A549 (cell line): ENCODE measurements at regions of chr3 and their contacts with region 1.

Region 1: DNA sequence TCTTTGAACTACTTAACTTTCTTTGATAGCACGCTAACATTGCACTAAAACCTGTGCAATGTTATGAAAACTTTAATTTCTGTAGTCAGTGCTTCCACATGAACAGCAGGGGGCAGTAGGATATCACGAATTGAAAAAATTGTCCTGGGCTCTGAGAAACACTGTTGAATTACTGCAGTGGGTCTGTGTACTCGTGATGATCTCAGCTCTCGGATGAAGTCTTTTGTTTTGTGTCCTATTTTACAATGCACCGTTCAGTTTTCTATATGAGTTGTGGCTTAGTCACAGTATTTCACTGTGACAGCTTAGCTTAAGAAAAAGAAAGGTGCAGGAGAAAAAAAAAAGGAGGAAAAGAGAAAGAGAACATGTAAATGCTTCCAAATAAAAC is 141.3 kb upstream of the CCDC54 start:
- DNase-seq: peak; percentile 69 to 81
- ATAC-seq: peak; percentile 66 to 72
- H3K4me3 ChIP-seq: peak overlapping the region; percentile 47
- H3K27ac ChIP-seq: peak overlapping the region; percentile 53 to 69
- H3K4me1 ChIP-seq: peaks cover 6% of the 10 kb centered on the region; the same call in 2 of the 3 replicates
- CTCF ChIP-seq: peak; percentile 97
- EP300 ChIP-seq: no peak
- POLR2A ChIP-seq: no peak
- RAD21 ChIP-seq: peak; percentile 95

Region 2: GRCh38 chr3:107216711-107217110 is 19.2 kb before region 1 on chr3:
- CTCF ChIA-PET with region 1: interaction called, 40 read pairs
- POLR2A ChIA-PET with region 1: no interaction called
- DNase-seq: no peak
- ATAC-seq: peak; percentile 61 to 71
- H3K4me3 ChIP-seq: no peak overlapping the region
- H3K27ac ChIP-seq: peak overlapping the region; percentile 51 to 75; a peak in 5 of 6 replicates
- H3K4me1 ChIP-seq: peaks cover 23% of the 10 kb centered on the region; the same call in 2 of the 3 replicates
- CTCF ChIP-seq: no peak
- EP300 ChIP-seq: no peak
- POLR2A ChIP-seq: no peak
- RAD21 ChIP-seq: no peak

Region 3: GRCh38 chr3:107249132-107249531 is 13.2 kb after region 1 on chr3:
- CTCF ChIA-PET with region 1: interaction called, 16 read pairs
- POLR2A ChIA-PET with region 1: no interaction called
- DNase-seq: no peak
- ATAC-seq: no peak
- H3K4me3 ChIP-seq: no peak overlapping the region
- H3K27ac ChIP-seq: no peak overlapping the region
- H3K4me1 ChIP-seq: no peaks in the 10 kb centered on the region
- CTCF ChIP-seq: no peak
- EP300 ChIP-seq: no peak
- POLR2A ChIP-seq: no peak
- RAD21 ChIP-seq: no peak

Region 4: GRCh38 chr3:107421170-107421792 is 185.4 kb after region 1 on chr3:
- CTCF ChIA-PET with region 1: interaction called, 14 read pairs
- POLR2A ChIA-PET with region 1: no interaction called
- DNase-seq: peak in 1 of 2 experiments; percentile 66
- ATAC-seq: peak; percentile 81 to 91
- H3K4me3 ChIP-seq: peak overlapping the region; percentile 27; the same call in 1 of the 3 replicates
- H3K27ac ChIP-seq: 0 out of 6 replicates have a peak overlapping the region, but pooled peaks of 1 of the 2 experiments have one; percentile 61
- H3K4me1 ChIP-seq: no peaks in the 10 kb centered on the region
- CTCF ChIP-seq: peak; percentile 80
- EP300 ChIP-seq: no peak
- POLR2A ChIP-seq: no peak
- RAD21 ChIP-seq: peak; percentile 66 to 67

Region 5: GRCh38 chr3:107543666-107544065 is 307.7 kb after region 1 on chr3:
- CTCF ChIA-PET with region 1: interaction called, 10 read pairs
- POLR2A ChIA-PET with region 1: no interaction called
- DNase-seq: peak in 1 of 2 experiments; percentile 51
- ATAC-seq: peak in 1 of 2 experiments; percentile 51; a peak in 2 of 6 replicates
- H3K4me3 ChIP-seq: no peak overlapping the region
- H3K27ac ChIP-seq: no peak overlapping the region
- H3K4me1 ChIP-seq: no peaks in the 10 kb centered on the region
- CTCF ChIP-seq: peak; percentile 49
- EP300 ChIP-seq: no peak
- POLR2A ChIP-seq: no peak
- RAD21 ChIP-seq: peak; percentile 49

Region 6: DNA sequence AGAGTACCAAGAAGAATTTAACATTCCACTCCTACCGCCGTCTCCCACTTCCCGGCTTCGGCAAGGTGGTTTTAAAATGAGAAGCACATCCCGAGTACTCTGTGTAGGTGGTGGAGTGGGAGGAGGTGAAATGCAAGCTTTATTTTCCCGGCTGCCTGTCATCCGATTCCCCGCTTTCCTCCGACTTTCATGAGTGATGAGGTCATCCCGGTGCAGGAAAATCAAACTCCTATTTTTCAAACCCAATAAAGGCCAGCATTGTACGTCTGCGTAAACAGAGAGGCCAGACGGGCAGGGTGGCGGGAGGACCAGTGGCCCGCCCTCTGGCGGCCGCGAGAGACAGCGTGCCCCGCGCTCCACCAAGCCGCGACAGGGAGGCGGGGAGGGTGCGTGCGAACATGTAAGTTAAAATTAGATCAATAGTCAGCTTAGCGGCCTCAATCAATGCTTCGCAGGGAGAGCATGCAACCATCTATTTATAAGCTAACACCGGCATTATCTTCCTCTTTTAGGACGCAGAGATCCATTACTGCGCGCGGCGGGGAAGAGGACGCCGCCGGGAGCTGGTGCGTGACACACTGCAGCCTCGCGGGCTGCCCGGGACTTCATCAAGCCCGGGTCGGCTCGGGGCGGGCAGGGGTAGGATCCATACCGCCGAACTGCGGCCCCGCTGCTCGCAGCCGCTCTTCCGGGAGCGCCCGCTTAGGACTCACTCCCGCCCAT is 691.6 kb after region 1 on chr3:
- CTCF ChIA-PET with region 1: interaction called, 20 read pairs
- POLR2A ChIA-PET with region 1: no interaction called
- DNase-seq: peak; percentile 62 to 82
- ATAC-seq: peak; percentile 99
- H3K4me3 ChIP-seq: peak overlapping the region; percentile 61
- H3K27ac ChIP-seq: peak overlapping the region; percentile 41 to 58; a peak in 5 of 6 replicates
- H3K4me1 ChIP-seq: no peaks in the 10 kb centered on the region
- CTCF ChIP-seq: peak; percentile 90
- EP300 ChIP-seq: no peak
- POLR2A ChIP-seq: no peak
- RAD21 ChIP-seq: peak; percentile 63 to 79